ENCODE measurements at regions of chr20 and their contacts with region 1.

Region 1: GRCh38 chr20:36064658-36065426 is 89.7 kb upstream of the EPB41L1 start:
- DNase-seq: peak; percentile 89 to 94 (median 90)
- H3K4me3 ChIP-seq: peak overlapping the region; percentile 47 to 75
- H3K4me3 Mint-ChIP-seq: peak overlapping the region; percentile 87 to 92 (median 89)
- H3K27ac ChIP-seq: peak overlapping the region; percentile 45
- H3K27ac Mint-ChIP-seq: peak overlapping the region; percentile 60 to 89 (median 77)
- H3K4me1 ChIP-seq: peaks cover 11% of the 10 kb centered on the region
- H3K4me1 Mint-ChIP-seq: peaks cover 0 to 5% (median 4%) of the 10 kb centered on the region in 4 donors
- H3K27me3 ChIP-seq: no peaks in the 10 kb centered on the region
- H3K27me3 Mint-ChIP-seq: peaks cover 0 to 3% of the 10 kb centered on the region in 2 donors

Region 2: DNA sequence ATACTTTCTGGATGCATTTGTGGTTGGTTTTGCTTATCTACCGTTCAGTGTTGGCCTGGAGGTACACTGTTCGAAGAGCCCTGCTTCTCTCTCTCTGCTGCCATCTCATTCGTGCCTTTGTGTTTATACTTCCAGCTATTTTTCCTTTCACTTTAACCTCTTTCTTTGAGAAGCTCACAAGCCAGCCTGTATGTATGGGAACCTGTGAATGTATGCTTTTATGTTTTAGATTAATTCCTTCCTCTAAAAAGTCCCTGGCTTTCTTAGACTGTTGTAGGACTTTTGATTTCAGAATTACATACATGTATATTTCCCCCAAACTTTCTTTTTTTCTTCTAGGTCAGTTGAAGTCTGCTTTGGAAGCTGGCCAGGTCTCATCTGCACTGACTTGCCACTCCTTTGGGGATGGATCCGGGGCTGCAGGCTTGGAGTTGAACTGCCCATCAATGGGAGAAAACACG is 193.5 kb before region 1 on chr20:
- CTCF ChIA-PET with region 1: no interaction called
- POLR2A ChIA-PET with region 1: no interaction called
- intact Hi-C with region 1: no loop called
- DNase-seq: no peak
- H3K4me3 ChIP-seq: no peak overlapping the region
- H3K4me3 Mint-ChIP-seq: no peak overlapping the region
- H3K27ac ChIP-seq: no peak overlapping the region
- H3K27ac Mint-ChIP-seq: peak overlapping the region in 5 of 7 donors; percentile 1 to 71 (median 32)
- H3K4me1 ChIP-seq: no peaks in the 10 kb centered on the region
- H3K4me1 Mint-ChIP-seq: peaks cover 4 to 11% (median 6%) of the 10 kb centered on the region in 4 donors
- H3K27me3 ChIP-seq: no peaks in the 10 kb centered on the region
- H3K27me3 Mint-ChIP-seq: no peaks in the 10 kb centered on the region

Region 3: DNA sequence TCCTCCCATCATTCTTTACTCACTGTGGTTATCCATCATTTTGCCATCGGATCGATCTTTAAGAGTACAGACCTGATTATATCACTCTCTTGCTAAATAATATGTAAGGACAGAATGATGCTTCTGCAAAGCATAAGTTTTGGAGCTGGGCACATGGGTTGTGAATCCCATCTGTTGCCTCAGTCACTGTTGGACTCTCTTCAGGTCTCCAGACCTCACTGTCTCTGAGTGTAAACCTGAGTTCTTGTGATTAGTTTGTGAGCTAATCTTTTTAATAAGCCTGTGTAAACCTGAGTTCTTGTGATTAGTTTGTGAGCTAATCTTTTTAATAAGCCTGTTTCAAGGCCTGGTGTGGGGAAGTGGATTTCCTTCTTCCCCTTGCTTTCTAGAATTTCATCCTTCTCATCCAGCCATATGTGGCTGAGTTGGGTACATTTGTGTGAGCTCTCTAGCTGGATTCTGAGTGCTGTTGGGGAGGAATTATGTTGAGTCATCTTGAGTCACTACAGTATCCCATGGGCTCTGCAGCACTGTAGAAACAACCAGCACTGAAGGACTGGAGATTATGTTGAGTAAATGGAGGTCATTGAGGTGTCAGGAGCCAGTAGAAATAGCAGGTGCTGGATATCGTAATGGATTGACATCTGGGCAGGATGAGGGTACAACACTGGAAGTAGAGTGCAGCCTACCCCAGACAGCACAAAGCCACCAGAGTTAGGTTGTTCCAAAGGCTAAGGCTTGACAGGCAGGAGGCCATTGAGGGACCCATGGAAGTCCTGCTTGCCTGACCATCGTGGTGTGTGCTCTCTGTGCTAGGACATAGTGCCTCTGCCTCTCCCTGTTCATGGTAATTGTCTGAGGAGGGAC is 162.9 kb before region 1 on chr20:
- CTCF ChIA-PET with region 1: no interaction called
- POLR2A ChIA-PET with region 1: no interaction called
- intact Hi-C with region 1: no loop called
- DNase-seq: no peak
- H3K4me3 ChIP-seq: no peak overlapping the region
- H3K4me3 Mint-ChIP-seq: no peak overlapping the region
- H3K27ac ChIP-seq: no peak overlapping the region
- H3K27ac Mint-ChIP-seq: peak overlapping the region in 4 of 7 donors; percentile 49 to 91 (median 82)
- H3K4me1 ChIP-seq: peaks cover 3% of the 10 kb centered on the region
- H3K4me1 Mint-ChIP-seq: peaks cover 11 to 27% (median 23%) of the 10 kb centered on the region in 4 donors
- H3K27me3 ChIP-seq: no peaks in the 10 kb centered on the region
- H3K27me3 Mint-ChIP-seq: no peaks in the 10 kb centered on the region

Region 4: DNA sequence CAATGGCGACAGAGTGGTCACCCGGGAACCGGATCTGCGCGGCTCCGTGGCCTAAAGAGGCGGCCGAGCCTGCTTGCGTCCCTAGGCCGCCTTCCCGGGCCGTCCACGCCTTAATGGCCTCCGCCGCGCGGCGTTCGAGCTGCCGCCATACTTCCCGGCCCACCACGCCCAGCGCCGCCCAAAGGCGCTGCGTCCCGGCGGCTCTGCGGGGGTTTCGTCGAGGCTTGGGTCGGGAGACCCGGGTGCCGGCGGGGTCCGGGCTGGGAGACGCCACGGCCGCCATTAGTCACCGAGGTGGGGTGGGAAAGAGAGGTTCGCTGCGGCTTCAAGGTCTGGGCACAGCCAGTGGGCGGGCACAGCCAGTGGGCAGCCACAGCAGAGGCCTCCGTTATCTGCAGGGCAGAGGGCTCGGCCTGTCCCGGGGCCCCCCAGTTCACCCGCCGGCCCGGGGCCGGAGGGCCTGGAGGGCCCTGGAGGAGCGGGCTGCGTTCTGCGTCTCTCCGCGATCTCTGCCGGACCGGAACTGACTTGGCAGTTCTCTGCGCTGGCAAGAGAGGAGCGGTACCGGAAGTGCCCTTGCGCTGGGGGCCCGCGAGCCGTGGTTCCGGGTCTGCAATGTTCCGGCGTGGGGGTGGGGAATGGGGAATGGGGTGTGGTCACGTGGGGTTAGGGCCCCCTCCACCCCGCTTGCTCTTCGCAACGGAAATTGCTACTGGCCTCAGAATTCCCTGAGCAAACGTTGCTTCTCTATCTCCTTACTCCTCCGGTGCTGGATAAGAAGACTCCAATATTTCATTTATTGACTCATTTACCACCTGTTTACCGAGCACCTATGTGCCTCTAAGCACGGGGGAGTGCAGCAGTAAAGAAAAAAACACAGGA is 14.2 kb before region 1 on chr20:
- CTCF ChIA-PET with region 1: no interaction called
- POLR2A ChIA-PET with region 1: interaction called, 10 read pairs
- intact Hi-C with region 1: loop called (anchors 1 kb)
- DNase-seq: peak; percentile 81 to 85 (median 81)
- H3K4me3 ChIP-seq: peak overlapping the region; percentile 21 to 70
- H3K4me3 Mint-ChIP-seq: peak overlapping the region; percentile 90 to 97 (median 95)
- H3K27ac ChIP-seq: peak overlapping the region; percentile 94
- H3K27ac Mint-ChIP-seq: peak overlapping the region; percentile 77 to 96 (median 94)
- H3K4me1 ChIP-seq: peaks cover 34% of the 10 kb centered on the region
- H3K4me1 Mint-ChIP-seq: peaks cover 29 to 52% (median 38%) of the 10 kb centered on the region in 4 donors
- H3K27me3 ChIP-seq: no peaks in the 10 kb centered on the region
- H3K27me3 Mint-ChIP-seq: peaks cover 3% of the 10 kb centered on the region in 2 donors